Endothelial cell of umbilical vein (primary cell): ENCODE measurements at regions of chr15 and their contacts with region 1.

Region 1: GRCh38 chr15:42084460-42085235 is 9.7 kb downstream of the PLA2G4D start:
- DNase-seq: peak; percentile 64
- H3K4me3 ChIP-seq: no peak overlapping the region
- H3K27ac ChIP-seq: no peak overlapping the region
- H3K4me1 ChIP-seq: no peaks in the 10 kb centered on the region
- H3K27me3 ChIP-seq: peaks cover 3 to 7% of the 10 kb centered on the region in 2 experiments
- CTCF ChIP-seq: peak; percentile 88 to 94
- POLR2A ChIP-seq: no peak

Region 2: DNA sequence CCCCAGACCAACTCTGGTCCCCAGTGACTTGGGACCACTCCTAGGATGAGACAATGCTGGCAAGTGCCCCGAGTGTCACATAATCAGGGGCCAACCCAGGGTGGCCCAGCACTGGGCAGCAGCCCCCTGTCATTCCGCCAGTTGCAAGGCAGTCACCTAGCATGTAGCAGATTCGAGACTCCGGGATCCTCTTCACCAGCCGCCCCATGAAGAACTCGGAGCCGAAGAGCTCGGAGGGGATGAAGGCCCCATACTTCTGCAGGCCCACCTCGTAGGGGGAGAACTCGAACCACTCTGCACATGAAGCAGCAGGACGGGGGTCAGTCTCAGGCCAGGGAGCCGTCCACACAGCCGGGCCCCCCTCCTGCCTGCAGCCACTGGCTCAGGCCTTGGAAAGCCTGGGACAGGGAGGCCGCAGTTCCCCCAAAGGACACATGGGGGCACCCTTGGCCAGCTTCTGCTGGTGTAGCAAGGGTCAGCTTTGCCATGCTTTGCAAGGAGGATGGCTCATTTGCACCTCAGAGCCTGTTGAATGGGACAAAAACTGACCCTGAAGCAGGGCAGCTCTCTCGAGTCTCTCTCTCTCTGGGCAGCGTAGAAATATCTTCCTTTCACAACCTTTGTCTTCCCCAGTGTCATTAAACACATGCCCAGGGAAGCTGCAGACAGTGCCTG is 95.3 kb before region 1 on chr15:
- CTCF ChIA-PET with region 1: interaction called, 77 read pairs
- POLR2A ChIA-PET with region 1: no interaction called
- dilution Hi-C with region 1: no loop called
- intact Hi-C with region 1: loop called (anchors 1 kb)
- DNase-seq: peak; percentile 77
- H3K4me3 ChIP-seq: no peak overlapping the region
- H3K27ac ChIP-seq: no peak overlapping the region
- H3K4me1 ChIP-seq: peaks cover 5% of the 10 kb centered on the region
- H3K27me3 ChIP-seq: no peaks in the 10 kb centered on the region
- CTCF ChIP-seq: peak; percentile 93 to 97
- POLR2A ChIP-seq: no peak

Region 3: GRCh38 chr15:42056934-42057779 is 27.5 kb before region 1 on chr15:
- CTCF ChIA-PET with region 1: interaction called, 21 read pairs
- POLR2A ChIA-PET with region 1: no interaction called
- dilution Hi-C with region 1: no loop called
- intact Hi-C with region 1: no loop called
- DNase-seq: peak; percentile 84
- H3K4me3 ChIP-seq: peak overlapping the region in 1 of 3 experiments; percentile 3
- H3K27ac ChIP-seq: no peak overlapping the region
- H3K4me1 ChIP-seq: peaks cover 4% of the 10 kb centered on the region
- H3K27me3 ChIP-seq: peaks cover 2 to 7% of the 10 kb centered on the region in 2 experiments
- CTCF ChIP-seq: peak; percentile 81 to 85
- POLR2A ChIP-seq: no peak

Region 4: DNA sequence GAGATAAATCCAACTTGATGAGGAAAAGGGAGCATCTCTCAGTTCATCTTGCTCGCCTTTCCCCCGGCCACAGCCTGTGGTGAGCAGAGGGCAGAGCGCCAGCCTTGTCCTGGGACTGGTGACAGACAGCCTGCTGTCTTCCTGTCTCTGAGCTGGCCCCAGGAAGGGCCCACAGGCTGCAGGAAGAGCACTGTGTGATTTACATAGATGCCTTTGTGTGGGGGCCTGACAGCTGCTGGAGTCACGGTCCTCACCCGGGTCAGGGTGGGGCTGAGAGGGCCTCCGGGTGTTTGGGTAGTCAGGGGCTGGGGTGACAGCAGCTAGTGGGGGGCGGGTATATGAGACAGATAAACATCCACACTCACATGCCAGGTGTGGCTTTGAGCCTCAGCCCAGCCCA is 19.6 kb before region 1 on chr15:
- CTCF ChIA-PET with region 1: interaction called, 34 read pairs
- POLR2A ChIA-PET with region 1: no interaction called
- dilution Hi-C with region 1: no loop called
- intact Hi-C with region 1: loop called (anchors 1 kb)
- DNase-seq: peak; percentile 34
- H3K4me3 ChIP-seq: no peak overlapping the region
- H3K27ac ChIP-seq: no peak overlapping the region
- H3K4me1 ChIP-seq: no peaks in the 10 kb centered on the region
- H3K27me3 ChIP-seq: no peaks in the 10 kb centered on the region
- CTCF ChIP-seq: no peak
- POLR2A ChIP-seq: no peak

Region 5: GRCh38 chr15:42072141-42072685 is 12.4 kb before region 1 on chr15:
- CTCF ChIA-PET with region 1: interaction called, 34 read pairs
- POLR2A ChIA-PET with region 1: no interaction called
- dilution Hi-C with region 1: no loop called
- intact Hi-C with region 1: no loop called
- DNase-seq: no peak
- H3K4me3 ChIP-seq: no peak overlapping the region
- H3K27ac ChIP-seq: no peak overlapping the region
- H3K4me1 ChIP-seq: no peaks in the 10 kb centered on the region
- H3K27me3 ChIP-seq: no peaks in the 10 kb centered on the region
- CTCF ChIP-seq: no peak
- POLR2A ChIP-seq: no peak

Region 6: GRCh38 chr15:42131826-42132806 is 47.5 kb after region 1 on chr15:
- CTCF ChIA-PET with region 1: interaction called, 34 read pairs
- POLR2A ChIA-PET with region 1: no interaction called
- dilution Hi-C with region 1: no loop called
- intact Hi-C with region 1: loop called (anchors 1 kb)
- DNase-seq: no peak
- H3K4me3 ChIP-seq: no peak overlapping the region
- H3K27ac ChIP-seq: no peak overlapping the region
- H3K4me1 ChIP-seq: no peaks in the 10 kb centered on the region
- H3K27me3 ChIP-seq: peaks cover 17 to 21% of the 10 kb centered on the region in 2 experiments
- CTCF ChIP-seq: no peak
- POLR2A ChIP-seq: no peak

Region 7: GRCh38 chr15:42137431-42138261 is 53.0 kb after region 1 on chr15:
- CTCF ChIA-PET with region 1: interaction called, 34 read pairs
- POLR2A ChIA-PET with region 1: no interaction called
- dilution Hi-C with region 1: no loop called
- intact Hi-C with region 1: loop called (anchors 1 kb)
- DNase-seq: peak; percentile 66
- H3K4me3 ChIP-seq: no peak overlapping the region
- H3K27ac ChIP-seq: no peak overlapping the region
- H3K4me1 ChIP-seq: no peaks in the 10 kb centered on the region
- H3K27me3 ChIP-seq: peaks cover 4 to 10% of the 10 kb centered on the region in 2 experiments
- CTCF ChIP-seq: peak; percentile 43 to 52
- POLR2A ChIP-seq: no peak